ENCODE measurements at regions of chr16 and their contacts with region 1.

Region 1: DNA sequence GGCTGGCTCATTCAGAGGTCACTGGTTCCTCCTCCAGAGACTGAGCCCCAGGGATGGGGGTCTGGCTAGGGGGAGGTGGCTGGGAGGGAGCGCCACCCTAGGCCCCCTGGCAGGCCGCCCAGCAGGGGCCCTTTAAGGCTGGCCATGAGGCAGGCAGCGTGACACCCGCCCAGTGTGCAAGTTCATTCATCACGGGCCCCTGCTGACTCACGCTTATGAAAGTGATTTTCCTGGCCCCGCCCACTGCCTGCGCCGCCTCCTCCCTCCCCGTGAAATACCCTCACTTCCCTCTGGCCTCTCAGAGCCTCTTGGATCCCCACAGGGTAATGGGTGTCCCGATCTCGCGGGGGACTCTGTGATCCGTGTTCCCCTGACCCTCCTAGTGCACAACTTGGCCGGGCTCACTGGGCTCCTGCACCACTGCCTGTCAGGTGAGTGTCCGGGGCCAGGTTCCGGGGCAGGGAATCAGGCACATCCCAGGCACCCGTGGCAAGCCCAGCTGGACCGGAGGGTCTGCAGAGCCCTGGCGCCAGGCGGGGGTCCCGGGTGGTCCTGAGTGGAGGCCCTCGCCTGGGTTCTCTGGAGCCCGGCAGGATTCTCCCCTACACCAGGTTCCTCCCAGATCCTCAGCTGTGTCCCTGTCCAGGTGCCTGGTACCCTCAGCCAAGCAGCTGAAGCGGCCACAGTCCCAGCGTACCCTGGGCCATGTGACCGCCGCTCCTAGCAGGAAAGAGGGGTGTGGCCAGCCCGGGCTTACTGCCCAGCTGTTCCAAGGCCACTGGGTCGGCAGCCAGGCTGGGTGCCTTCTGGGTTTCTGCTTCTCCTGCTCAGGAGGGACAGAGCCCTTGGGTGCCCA is at the start of gene OSGIN1:
- DNase-seq: peak; percentile 95
- H3K27ac ChIP-seq: peak within 1 kb of the TSS; percentile 92
- CTCF ChIP-seq: no peak

Region 2: DNA sequence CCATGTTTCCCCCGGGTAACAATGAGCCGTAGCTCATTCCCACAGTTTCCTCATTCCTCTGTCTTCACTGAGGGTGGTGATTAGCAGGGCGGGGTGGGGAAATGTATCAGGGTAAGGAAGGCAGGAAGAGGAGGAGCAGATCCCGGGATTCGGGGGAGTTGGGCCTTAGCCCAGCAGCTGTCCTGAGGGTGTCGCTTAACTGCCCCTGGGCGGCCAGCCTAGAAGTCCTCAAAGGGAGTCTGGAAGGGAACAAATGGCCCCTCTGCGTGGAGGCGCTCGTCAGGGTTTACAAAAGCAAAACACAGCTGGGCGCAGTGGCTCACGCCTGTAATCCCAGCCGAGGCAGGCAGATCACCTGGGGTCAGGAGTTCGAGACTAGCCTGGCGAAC is 39.9 kb before region 1 on chr16:
- CTCF ChIA-PET with region 1: no interaction called
- POLR2A ChIA-PET with region 1: no interaction called
- DNase-seq: no peak
- H3K27ac ChIP-seq: no peak overlapping the region
- CTCF ChIP-seq: no peak

Region 3: DNA sequence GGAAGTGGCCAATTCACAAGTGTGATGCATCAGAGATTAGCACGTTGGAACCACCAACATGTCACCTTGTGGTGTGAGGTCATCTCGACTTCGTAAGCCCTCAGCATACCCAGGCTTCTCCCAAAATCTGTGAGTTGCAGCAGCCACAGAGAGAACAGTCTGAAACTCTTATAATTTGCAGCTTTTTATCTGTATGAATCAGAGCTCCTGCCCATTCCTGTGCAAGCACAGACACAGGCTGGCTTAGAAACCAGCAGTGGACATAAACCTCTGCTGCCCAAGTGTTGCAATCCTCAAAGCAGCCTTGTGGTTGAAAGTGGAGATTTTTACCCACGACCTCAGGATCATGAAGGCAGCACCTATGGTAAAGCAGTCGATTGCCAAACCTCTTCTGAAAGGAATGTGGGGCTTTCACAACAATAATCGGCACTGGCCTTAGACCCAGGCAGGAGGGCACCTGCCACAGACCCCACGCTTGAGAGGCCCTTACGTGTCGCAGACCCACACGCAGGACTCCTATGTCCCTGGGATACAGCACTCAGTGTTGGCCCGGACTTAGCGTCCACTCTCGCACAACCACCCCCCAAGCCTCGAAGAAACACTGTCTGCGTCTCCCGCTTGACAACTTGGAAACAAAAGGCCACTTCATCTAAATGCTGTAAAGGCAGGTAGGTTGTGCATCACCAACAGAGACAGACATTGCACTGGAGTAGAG is 24.7 kb before region 1 on chr16:
- CTCF ChIA-PET with region 1: interaction called, 16 read pairs
- POLR2A ChIA-PET with region 1: no interaction called
- DNase-seq: peak; percentile 77
- H3K27ac ChIP-seq: peak overlapping the region; percentile 91
- CTCF ChIP-seq: no peak

Region 4: GRCh38 chr16:83989285-83989684 is 36.1 kb after region 1 on chr16:
- CTCF ChIA-PET with region 1: no interaction called
- POLR2A ChIA-PET with region 1: no interaction called
- DNase-seq: no peak
- H3K27ac ChIP-seq: no peak overlapping the region
- CTCF ChIP-seq: no peak

Region 5: DNA sequence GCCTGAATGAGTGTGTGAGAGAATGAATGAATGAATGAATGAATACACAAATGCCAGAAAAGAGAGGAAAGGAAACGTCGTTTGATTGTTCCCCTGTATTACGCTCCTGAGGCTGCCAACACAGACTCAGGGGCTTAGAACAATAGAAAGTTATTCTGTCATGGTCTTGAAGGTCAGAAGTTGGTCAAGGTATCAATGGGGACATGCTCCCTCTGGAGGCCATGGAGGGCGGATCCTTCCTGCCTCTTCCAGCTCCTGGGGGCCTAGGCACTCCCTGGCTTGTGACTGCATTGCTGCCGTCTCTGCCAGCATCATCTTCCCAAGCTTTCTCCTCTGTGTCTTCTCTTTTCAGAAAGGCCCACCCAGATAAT is 90.9 kb after region 1 on chr16:
- CTCF ChIA-PET with region 1: interaction called, 10 read pairs
- POLR2A ChIA-PET with region 1: interaction called, 3 read pairs
- DNase-seq: no peak
- H3K27ac ChIP-seq: no peak overlapping the region
- CTCF ChIP-seq: no peak

Region 6: DNA sequence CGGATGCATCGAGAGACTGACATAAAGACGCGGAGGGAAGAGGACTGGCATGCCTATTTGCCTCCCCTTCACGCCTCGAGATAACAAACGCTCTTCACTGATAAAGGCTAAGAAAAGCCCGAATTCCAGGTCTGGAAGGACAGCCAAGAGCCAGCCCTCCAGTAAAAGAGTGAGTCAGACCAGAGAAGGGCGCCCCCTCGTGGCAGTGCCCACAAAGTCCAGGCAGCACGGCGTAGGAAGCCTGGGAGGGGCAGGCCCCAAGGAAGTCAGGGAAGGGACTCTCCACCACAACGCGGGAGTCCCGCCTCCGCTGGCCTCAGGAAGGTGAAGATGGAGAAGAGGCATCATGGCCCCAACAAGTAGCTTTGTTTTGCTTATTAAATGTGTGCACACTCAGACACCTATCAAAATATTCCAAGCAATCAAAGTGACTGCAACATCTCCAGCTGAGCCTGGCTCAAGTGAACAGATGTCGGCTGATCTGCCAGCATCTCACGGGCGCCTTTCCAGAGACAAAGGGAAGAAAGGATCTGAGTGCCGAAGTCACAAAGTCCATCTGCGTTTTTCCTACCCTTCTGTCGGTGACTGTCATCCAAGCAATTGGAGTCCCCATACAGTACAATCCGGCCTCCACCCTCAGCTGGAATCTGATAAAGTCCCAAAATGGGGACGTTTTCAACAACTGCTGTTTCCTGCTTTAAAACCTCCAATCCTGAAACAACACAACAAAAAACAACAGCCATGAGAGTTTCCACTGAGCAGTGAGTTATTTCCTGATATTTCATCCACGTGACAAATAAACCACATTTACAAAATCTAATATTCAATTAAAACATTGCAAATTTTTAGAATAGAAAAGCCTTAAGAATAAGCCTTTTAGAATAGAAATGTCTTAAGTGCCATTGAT is 109.8 kb after region 1 on chr16:
- CTCF ChIA-PET with region 1: interaction called, 11 read pairs
- POLR2A ChIA-PET with region 1: no interaction called
- DNase-seq: peak; percentile 60
- H3K27ac ChIP-seq: 0 out of 2 replicates have a peak overlapping the region, but pooled peaks have one; percentile 3
- CTCF ChIP-seq: peak; percentile 84

Measured in RWPE1 (cell line).